GM12878 (cell line): ENCODE measurements at regions of chr12 and their contacts with region 1.

Region 1: GRCh38 chr12:48350249-48351021 is at the start of gene ZNF641:
- DNase-seq: no peak
- ATAC-seq: peak; percentile 94
- H3K4me3 ChIP-seq: peak within 1 kb of the TSS; percentile 85
- H3K27ac ChIP-seq: peak within 1 kb of the TSS; percentile 56
- H3K4me1 ChIP-seq: no peaks in the 10 kb centered on the region
- H3K27me3 ChIP-seq: no peaks in the 10 kb centered on the region
- CTCF ChIP-seq: no peak
- EP300 ChIP-seq: no peak
- POLR2A ChIP-seq: peak; percentile 81
- RAD21 ChIP-seq: no peak
- polyA plus RNA-seq, gene ZNF641: 1.1 to 1.4 TPM

Region 2: DNA sequence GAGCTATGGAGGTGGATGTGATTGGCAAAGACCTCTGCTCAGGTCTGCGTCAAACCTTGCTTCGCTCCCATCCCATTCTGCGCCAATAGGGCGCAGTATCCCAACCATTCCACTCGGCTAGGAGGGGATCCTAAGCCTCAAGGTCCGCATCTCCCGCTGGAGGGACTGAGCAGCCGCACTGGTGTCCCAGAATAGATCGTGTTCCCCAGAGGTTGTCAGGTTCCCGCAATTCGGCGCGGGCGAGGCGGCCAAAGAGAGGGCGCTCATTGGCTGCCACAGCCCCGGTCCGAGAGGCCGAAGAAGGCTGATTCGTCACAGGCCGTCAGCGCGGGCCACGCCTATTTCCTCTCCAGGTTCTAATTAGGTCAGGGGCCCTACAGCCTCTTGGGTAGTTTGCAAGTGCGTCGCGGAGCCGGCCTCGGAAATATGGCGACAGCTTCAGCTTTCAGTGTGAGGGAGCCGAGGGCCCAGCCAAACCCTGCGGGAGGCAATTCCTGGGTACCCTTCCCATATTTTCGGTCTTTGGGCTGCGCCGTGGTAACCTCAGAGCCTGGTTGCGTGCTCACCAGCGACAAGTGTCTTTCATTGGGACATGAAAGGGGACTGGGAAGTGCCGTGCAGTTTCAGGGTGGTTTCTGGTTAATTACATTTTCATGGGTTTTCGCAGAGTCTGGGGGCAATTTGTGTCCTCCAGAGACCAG is 152.3 kb before region 1 on chr12:
- CTCF ChIA-PET with region 1: interaction called, 6 read pairs
- POLR2A ChIA-PET with region 1: no interaction called
- RAD21 ChIA-PET with region 1: no interaction called
- SMC1A ChIA-PET with region 1: no interaction called
- in situ Hi-C with region 1: no loop called
- intact Hi-C with region 1: loop called (anchors 10 kb)
- DNase-seq: peak; percentile 80
- ATAC-seq: peak; percentile 99
- H3K4me3 ChIP-seq: peak overlapping the region; percentile 86
- H3K27ac ChIP-seq: peak overlapping the region; percentile 99
- H3K4me1 ChIP-seq: 0 out of 2 replicates have a peak, but pooled peaks cover 3% of the 10 kb centered on the region
- H3K27me3 ChIP-seq: no peaks in the 10 kb centered on the region
- CTCF ChIP-seq: no peak; a peak in 1 of 6 replicates
- EP300 ChIP-seq: no peak
- POLR2A ChIP-seq: peak; percentile 99
- RAD21 ChIP-seq: no peak